OCI-LY7 (cell line): ENCODE measurements at regions of chr3 and their contacts with region 1.

Region 1: DNA sequence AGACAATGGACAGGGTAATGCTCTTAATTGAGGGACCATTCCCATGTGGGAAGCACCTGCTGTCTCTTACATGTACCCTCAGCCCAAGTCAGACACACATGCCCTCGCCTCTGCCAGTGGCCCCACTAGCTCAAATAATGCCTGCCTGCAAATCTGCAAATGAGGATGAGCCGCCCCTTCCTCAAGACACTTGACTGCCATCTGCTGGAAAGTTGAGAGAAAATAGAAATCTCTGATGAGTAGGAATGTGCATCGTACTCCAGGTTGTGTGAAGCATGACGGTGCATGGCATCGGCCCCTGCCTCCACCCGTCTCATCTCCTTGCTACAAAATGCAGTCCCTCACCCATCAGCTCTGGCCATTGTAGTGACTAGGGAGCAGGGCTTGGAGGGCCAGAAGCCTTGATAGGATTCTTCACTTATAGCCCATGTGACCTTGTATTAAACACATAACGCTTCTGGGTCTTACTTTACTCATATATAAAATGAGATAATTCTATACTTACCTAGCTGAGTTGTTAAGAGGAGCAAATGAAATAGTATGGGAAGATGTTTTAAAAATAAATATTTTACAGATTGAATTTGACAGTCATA is 6.3 kb upstream of the SCN5A start:
- DNase-seq: peak; percentile 51
- H3K4me3 ChIP-seq: no peak overlapping the region
- H3K27ac ChIP-seq: no peak overlapping the region
- H3K4me1 ChIP-seq: no peaks in the 10 kb centered on the region
- CTCF ChIP-seq: peak; percentile 78

Region 2: DNA sequence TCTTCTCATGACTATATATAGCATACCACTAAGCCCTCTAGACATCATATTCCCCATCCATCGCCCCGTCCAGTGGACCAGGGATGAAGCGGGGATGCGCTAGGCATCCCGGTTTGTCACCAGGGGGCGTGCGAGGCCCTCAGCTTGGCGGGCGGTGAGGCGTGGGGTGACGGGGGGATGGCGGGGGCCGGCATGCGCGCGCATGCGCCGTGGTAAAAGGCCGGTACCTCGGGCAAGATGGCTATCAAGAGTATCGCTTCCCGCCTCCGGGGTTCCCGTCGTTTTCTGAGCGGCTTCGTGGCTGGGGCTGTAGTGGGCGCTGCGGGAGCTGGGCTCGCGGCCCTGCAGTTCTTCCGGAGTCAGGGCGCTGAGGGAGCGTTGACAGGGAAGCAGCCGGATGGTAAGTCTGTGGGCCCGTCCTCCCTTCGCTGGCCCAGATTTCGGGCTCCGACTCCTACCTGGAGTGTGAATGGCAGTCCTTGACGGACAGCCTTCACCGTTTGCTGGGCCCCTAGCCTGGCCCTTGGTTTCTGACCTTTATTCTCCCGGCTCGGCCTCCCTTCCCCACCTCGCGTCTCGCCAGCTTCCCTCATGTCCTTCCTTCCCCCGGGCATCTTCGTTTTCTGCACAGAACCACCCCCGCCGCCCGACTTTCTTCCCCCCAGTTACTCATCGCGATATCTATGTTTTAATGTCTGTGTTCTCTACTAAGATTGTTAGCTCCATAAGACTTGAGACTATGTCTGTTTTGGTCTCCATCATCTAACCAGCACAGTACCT is 159.5 kb before region 1 on chr3 and contains the start of gene EXOG:
- CTCF ChIA-PET with region 1: no interaction called
- POLR2A ChIA-PET with region 1: interaction called, 3 read pairs
- intact Hi-C with region 1: loop called (anchors 1 kb)
- DNase-seq: peak; percentile 95
- H3K4me3 ChIP-seq: peak within 1 kb of the TSS; percentile 77
- H3K27ac ChIP-seq: peak within 1 kb of the TSS; percentile 59
- H3K4me1 ChIP-seq: peaks cover 13% of the 10 kb centered on the region
- CTCF ChIP-seq: peak; percentile 89
- total RNA-seq, gene EXOG: 15.8 and 30.7 TPM in 2 replicates

Region 3: GRCh38 chr3:38521391-38521987 is 134.3 kb before region 1 on chr3:
- CTCF ChIA-PET with region 1: no interaction called
- POLR2A ChIA-PET with region 1: interaction called, 3 read pairs
- intact Hi-C with region 1: loop called (anchors 1 kb)
- DNase-seq: peak; percentile 68
- H3K4me3 ChIP-seq: no peak overlapping the region
- H3K27ac ChIP-seq: no peak overlapping the region
- H3K4me1 ChIP-seq: no peaks in the 10 kb centered on the region
- CTCF ChIP-seq: peak; percentile 96